Body of pancreas (tissue), 4 donors: ENCODE measurements at regions of chr17 and their contacts with region 1.

Region 1: GRCh38 chr17:7825206-7825990 is 8.6 kb upstream of the KDM6B start:
- DNase-seq: peak in 1 of 4 donors; percentile 34
- ATAC-seq: peak; percentile 39
- H3K4me3 ChIP-seq: no peak overlapping the region
- H3K27ac ChIP-seq: no peak overlapping the region
- H3K4me1 ChIP-seq: peaks cover 10% of the 10 kb centered on the region
- H3K27me3 ChIP-seq: no peaks in the 10 kb centered on the region
- CTCF ChIP-seq: no peak
- POLR2A ChIP-seq: no peak

Region 2: GRCh38 chr17:7856883-7857723 is 31.7 kb after region 1 on chr17 and contains the start of gene NAA38:
- intact Hi-C with region 1: loop called (anchors 5 kb)
- DNase-seq: peak; percentile 96 to 99 (median 98)
- ATAC-seq: peak; percentile 90
- H3K4me3 ChIP-seq: peak within 1 kb of the TSS; percentile 49
- H3K27ac ChIP-seq: peak within 1 kb of the TSS; percentile 82 to 96 (median 94)
- H3K4me1 ChIP-seq: peaks cover 36% of the 10 kb centered on the region
- H3K27me3 ChIP-seq: no peaks in the 10 kb centered on the region
- CTCF ChIP-seq: peak; percentile 18 to 73 (median 64)
- POLR2A ChIP-seq: peak in 2 of 3 donors; percentile 57 to 63
- total RNA-seq, gene NAA38: 25.7 to 50.1 TPM

Region 3: DNA sequence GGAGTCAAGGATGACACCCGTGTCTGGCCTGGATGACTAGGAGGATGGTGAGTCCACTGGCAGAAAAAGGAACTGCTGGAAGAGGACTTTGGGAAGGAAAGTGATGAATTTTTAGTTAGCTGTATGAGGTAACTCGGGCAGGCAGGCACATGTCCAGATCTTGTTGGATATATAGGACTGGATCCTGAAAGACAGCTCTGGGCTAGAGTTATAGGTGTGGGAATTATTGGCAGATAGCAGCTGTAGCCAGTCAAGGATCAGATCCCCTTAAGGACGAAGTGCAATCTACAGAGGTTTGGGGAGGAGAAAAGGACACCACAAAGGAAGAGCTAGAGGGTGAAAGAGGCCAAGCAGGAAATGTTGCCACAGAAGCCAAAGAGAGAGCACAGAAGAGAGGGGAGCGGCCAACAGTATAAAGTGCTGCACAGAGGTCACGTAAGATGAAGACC is 42.5 kb after region 1 on chr17:
- intact Hi-C with region 1: no loop called
- DNase-seq: no peak
- ATAC-seq: no peak
- H3K4me3 ChIP-seq: no peak overlapping the region
- H3K27ac ChIP-seq: no peak overlapping the region
- H3K4me1 ChIP-seq: no peaks in the 10 kb centered on the region
- H3K27me3 ChIP-seq: no peaks in the 10 kb centered on the region
- CTCF ChIP-seq: no peak
- POLR2A ChIP-seq: no peak